BJ (cell line): ENCODE measurements at regions of chr10 and their contacts with region 1.

Region 1: GRCh38 chr10:119750391-119751230 is 24.8 kb downstream of the INPP5F start:
- DNase-seq: no peak
- H3K4me3 ChIP-seq: no peak overlapping the region
- H3K27me3 ChIP-seq: no peaks in the 10 kb centered on the region
- CTCF ChIP-seq: peak; percentile 94

Region 2: GRCh38 chr10:119686439-119687191 is 64.0 kb before region 1 on chr10:
- CTCF ChIA-PET with region 1: interaction called, 15 read pairs
- POLR2A ChIA-PET with region 1: no interaction called
- DNase-seq: peak; percentile 65
- H3K4me3 ChIP-seq: peak overlapping the region; percentile 32
- H3K27me3 ChIP-seq: no peaks in the 10 kb centered on the region; the same call in 1 of the 2 replicates
- CTCF ChIP-seq: peak; percentile 90

Region 3: DNA sequence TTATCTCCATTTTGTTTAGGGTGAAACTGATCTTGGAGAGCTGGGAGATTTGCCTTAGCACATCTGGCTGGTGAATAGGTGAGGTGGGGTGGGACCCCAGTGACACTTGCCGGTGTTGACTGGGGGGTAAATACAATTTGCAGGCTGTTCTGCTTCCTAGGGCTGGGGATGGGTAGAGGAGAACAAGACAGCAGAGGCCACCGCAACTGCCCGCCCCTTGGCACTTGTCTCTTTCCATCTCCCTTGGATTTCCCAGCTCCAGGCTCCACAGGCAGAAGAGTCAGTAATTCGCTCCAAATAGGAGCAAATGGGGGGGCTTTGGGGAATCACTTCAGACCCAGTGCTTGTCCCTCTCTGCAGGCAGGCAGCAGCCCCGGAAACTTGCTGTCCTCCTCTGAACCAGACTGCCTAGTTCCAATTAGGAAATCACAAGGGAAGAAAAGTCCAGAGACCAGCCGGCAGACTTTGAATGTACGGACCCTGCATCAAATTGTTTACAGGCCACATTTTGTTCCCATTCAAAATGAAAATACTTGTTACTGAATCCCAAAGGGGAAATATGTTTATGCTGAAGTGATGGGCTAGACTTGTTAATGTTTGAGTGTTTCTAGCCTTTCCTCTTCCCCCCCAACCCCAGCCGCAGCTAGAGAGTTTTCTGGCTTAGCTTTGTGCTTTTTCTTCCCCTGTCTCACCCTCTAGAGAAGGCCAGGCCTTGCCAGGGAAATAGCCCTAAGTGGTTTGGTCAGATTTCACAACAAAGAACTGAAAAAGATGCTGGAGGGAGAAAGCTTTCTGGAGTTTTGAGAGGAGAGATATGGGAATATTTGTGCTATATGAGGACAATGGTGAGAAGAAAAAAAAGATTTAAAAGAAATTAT is 34.7 kb before region 1 on chr10:
- CTCF ChIA-PET with region 1: no interaction called
- POLR2A ChIA-PET with region 1: no interaction called
- DNase-seq: no peak
- H3K4me3 ChIP-seq: no peak overlapping the region
- H3K27me3 ChIP-seq: no peaks in the 10 kb centered on the region
- CTCF ChIP-seq: no peak

Region 4: GRCh38 chr10:119737827-119738226 is 12.8 kb before region 1 on chr10:
- CTCF ChIA-PET with region 1: interaction called, 24 read pairs
- POLR2A ChIA-PET with region 1: no interaction called
- DNase-seq: no peak
- H3K4me3 ChIP-seq: no peak overlapping the region
- H3K27me3 ChIP-seq: no peaks in the 10 kb centered on the region
- CTCF ChIP-seq: no peak

Region 5: GRCh38 chr10:119849031-119849789 is 98.6 kb after region 1 on chr10:
- CTCF ChIA-PET with region 1: interaction called, 15 read pairs
- POLR2A ChIA-PET with region 1: no interaction called
- DNase-seq: peak; percentile 64
- H3K4me3 ChIP-seq: no peak overlapping the region
- H3K27me3 ChIP-seq: no peaks in the 10 kb centered on the region
- CTCF ChIP-seq: no peak

Region 6: GRCh38 chr10:119872860-119873681 is 122.5 kb after region 1 on chr10:
- CTCF ChIA-PET with region 1: interaction called, 186 read pairs
- POLR2A ChIA-PET with region 1: no interaction called
- DNase-seq: no peak
- H3K4me3 ChIP-seq: peak overlapping the region; percentile 85
- H3K27me3 ChIP-seq: no peaks in the 10 kb centered on the region
- CTCF ChIP-seq: 0 out of 2 replicates have a peak, but pooled peaks have one; percentile 6

Region 7: DNA sequence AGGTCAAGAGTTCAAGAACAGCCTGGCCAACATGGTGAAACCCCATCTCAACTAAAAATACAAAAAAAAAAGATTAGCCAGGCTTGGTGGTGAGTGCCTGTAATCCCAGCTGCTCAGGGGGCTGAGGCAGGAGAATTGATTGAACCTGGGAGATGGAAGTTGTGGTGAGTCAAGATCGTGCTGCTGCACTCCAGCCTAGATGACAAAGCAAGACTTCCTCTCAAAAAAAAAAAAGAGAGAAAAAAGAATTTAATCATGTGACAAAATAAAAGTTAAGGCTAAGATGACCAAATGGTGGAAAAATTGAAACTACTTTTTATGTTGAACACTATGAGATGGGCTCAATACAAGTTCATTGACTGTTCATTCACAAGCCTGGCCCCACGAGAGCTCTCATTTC is 959.5 kb after region 1 on chr10:
- CTCF ChIA-PET with region 1: no interaction called
- POLR2A ChIA-PET with region 1: no interaction called
- DNase-seq: no peak
- H3K4me3 ChIP-seq: no peak overlapping the region
- H3K27me3 ChIP-seq: no peaks in the 10 kb centered on the region
- CTCF ChIP-seq: no peak